Pancreas (tissue), 10 donors: ENCODE measurements at regions of chr1 and their contacts with region 1.

Region 1: DNA sequence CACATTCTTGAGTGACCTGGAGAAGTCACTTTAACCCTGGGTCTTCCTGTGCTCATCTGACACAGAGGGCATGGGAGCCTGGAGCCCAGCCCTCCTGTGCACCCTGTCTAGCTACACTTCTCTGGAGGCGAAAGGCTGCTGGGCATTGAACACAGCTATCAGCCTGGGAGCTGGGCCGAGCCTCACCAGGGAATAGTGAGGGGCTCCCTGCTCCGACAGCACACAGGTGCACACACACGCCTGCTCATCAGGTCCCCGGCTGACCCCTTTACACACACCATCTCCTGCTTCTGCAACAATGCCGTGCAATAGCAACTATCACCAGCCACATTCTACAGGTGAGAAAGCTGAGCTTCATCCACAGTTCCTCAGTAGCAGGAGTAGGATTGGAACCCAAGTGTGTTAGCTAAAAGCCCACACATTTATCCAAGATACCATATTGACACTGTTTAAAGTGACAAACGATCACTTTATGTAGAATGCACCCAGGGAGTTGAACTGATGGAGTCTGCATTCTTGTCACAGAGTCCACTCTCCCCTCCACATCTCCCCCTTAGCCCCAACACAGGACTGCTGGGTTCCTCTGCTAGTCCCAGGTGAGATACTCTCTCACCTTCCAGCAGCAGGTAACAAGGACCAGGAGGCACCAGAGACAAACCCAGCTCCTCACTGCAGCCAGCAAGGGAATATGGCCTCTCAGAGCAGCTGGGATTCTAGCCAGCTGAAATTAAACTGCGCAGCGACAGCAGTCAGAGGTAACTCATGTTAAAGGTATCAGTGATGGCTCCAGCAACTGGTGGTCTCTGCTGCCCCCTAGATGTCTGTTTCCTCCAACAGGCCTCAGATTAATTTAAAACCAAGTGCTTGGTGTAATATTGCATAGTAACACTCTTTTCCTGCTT is 18.3 kb upstream of the CAPN8 start:
- DNase-seq: peak in 4 of 6 donors; percentile 49 to 82 (median 53)
- ATAC-seq: peak; percentile 67 to 95 (median 92)
- H3K4me3 ChIP-seq: no peak overlapping the region
- H3K27ac ChIP-seq: no peak overlapping the region
- H3K4me1 ChIP-seq: no peaks in the 10 kb centered on the region
- H3K27me3 ChIP-seq: no peaks in the 10 kb centered on the region
- CTCF ChIP-seq: peak in 3 of 4 donors; percentile 48 to 57 (median 48)

Region 2: DNA sequence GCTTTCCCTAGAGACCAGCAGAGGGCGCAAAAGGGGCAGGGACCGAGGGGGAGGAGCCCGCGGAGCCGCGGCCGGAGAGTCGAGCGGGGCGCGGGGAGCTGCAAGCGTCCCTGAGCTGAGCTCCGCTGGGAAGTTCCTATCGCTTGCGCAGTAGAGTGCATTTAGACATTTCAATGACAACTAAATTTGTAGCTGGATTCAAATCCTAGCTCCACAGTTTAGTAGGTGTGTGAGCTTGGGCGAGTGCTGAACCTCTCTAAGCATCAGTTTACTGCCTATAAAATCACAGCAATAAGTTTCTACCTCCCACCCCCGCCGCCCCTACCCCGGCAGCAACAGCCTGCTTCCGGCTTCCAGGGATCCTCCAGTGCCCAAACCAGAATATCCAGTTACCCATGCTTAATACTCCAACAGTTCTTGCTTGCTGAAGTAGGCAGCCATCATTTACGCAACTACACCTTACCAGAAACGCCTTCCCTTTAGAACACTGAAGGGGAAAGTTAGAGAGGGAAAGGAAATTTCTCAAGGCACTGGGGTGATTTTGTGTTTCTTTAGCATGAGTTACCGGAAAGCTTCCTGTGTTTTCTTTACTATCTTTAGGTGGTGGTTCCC is 549.9 kb before region 1 on chr1:
- intact Hi-C with region 1: loop called in 2 of 3 experiments (anchors 5 to 10 kb)
- DNase-seq: peak; percentile 78 to 94 (median 90)
- ATAC-seq: peak; percentile 91 to 95 (median 94)
- H3K4me3 ChIP-seq: peak overlapping the region; percentile 0 to 44 (median 20)
- H3K27ac ChIP-seq: peak overlapping the region; percentile 46 to 85 (median 56)
- H3K4me1 ChIP-seq: peaks cover 3 to 17% (median 6%) of the 10 kb centered on the region in 3 donors
- H3K27me3 ChIP-seq: no peaks in the 10 kb centered on the region
- CTCF ChIP-seq: peak in 3 of 4 donors; percentile 87 to 96 (median 94)

Region 3: GRCh38 chr1:223538981-223539380 is 144.9 kb before region 1 on chr1:
- intact Hi-C with region 1: no loop called
- DNase-seq: no peak
- ATAC-seq: no peak
- H3K4me3 ChIP-seq: no peak overlapping the region
- H3K27ac ChIP-seq: no peak overlapping the region
- H3K4me1 ChIP-seq: no peaks in the 10 kb centered on the region
- H3K27me3 ChIP-seq: no peaks in the 10 kb centered on the region
- CTCF ChIP-seq: no peak

Region 4: GRCh38 chr1:223549740-223550139 is 134.1 kb before region 1 on chr1:
- intact Hi-C with region 1: no loop called
- DNase-seq: no peak
- ATAC-seq: no peak
- H3K4me3 ChIP-seq: no peak overlapping the region
- H3K27ac ChIP-seq: no peak overlapping the region
- H3K4me1 ChIP-seq: no peaks in the 10 kb centered on the region
- H3K27me3 ChIP-seq: no peaks in the 10 kb centered on the region
- CTCF ChIP-seq: no peak

Region 5: GRCh38 chr1:224080115-224080774 is 396.4 kb after region 1 on chr1:
- intact Hi-C with region 1: no loop called
- DNase-seq: no peak
- ATAC-seq: peak in 1 of 4 donors; percentile 16
- H3K4me3 ChIP-seq: no peak overlapping the region
- H3K27ac ChIP-seq: no peak overlapping the region
- H3K4me1 ChIP-seq: no peaks in the 10 kb centered on the region
- H3K27me3 ChIP-seq: no peaks in the 10 kb centered on the region
- CTCF ChIP-seq: no peak